ENCODE measurements at regions of chr15 and their contacts with region 1.

Region 1: GRCh38 chr15:52780172-52780980 is 9.8 kb downstream of the ONECUT1 start:
- DNase-seq: peak; percentile 55 to 73 (median 70)
- H3K4me3 ChIP-seq: peak overlapping the region; percentile 22 to 53 (median 34)
- H3K27ac ChIP-seq: no peak overlapping the region
- H3K4me1 ChIP-seq: peaks cover 0 to 9% (median 0%) of the 10 kb centered on the region in 3 donors
- H3K27me3 ChIP-seq: peaks cover 39% of the 10 kb centered on the region
- CTCF ChIP-seq: peak; percentile 87

Region 2: DNA sequence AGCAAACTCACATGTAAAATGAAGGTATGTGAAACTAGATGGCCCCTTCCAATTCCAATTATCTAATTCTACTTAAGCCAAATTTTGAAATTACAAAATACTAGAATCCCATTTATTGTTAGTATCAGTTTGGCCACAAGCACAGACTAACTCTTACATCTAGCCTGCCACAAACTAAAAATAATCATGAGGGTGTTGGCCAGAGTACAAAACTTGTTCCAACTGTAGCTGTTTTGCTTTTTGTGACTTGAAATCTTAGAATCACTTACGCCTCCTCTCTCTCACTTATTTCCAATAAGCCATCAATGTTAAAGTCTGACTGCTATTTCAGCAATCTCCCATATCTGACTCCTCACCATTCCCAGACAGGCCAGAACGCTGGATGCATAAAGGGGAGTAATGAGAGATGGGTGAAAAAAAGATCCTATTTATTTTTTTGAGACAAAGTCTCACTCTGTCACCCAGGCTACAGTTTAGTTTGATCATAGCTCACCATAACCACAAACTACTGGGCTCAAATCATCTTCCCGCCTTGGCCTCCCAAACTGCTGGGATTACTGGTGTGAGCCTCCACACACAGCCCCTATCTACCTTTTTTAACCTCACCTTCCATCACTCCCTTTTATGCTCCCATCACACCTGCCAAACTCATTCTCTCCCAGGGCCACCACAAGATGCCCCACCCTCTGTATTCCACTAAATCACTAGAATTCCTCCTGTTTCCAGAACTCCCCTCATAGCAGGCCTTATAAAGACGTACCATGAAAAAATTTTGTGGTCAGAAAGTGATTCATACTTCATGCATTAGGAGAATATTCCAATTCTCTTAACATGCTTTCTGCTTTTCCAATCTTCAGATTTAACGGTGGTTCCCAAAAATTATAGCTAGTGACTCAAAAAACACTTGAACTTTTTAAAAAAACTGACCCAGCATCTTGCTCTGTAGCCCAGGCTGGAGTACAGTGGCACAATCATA is 137.7 kb before region 1 on chr15:
- intact Hi-C with region 1: no loop called
- DNase-seq: no peak
- H3K4me3 ChIP-seq: no peak overlapping the region
- H3K27ac ChIP-seq: no peak overlapping the region
- H3K4me1 ChIP-seq: peaks cover 0 to 2% (median 0%) of the 10 kb centered on the region in 3 donors
- H3K27me3 ChIP-seq: no peaks in the 10 kb centered on the region
- CTCF ChIP-seq: no peak

Region 3: DNA sequence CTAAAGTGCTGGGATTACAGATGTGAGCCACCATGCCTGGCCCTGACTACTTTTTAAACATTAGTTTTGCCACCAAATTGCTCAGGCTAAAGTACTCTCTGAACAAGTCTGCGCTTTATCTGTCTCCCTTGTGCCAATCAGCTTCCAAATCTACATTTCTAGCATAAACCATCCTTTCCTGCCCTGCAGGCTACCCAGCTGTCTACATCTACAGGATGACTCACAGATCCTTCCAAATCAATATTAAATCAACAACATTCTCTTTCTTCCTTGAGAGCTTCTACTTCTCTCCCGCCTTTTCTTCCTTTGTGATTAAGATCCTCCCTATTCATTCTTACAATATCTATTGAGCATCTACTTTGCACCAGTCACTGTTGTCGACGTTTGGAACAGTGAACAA is 85.2 kb before region 1 on chr15:
- intact Hi-C with region 1: no loop called
- DNase-seq: no peak
- H3K4me3 ChIP-seq: no peak overlapping the region
- H3K27ac ChIP-seq: no peak overlapping the region
- H3K4me1 ChIP-seq: no peaks in the 10 kb centered on the region
- H3K27me3 ChIP-seq: no peaks in the 10 kb centered on the region
- CTCF ChIP-seq: no peak

Region 4: DNA sequence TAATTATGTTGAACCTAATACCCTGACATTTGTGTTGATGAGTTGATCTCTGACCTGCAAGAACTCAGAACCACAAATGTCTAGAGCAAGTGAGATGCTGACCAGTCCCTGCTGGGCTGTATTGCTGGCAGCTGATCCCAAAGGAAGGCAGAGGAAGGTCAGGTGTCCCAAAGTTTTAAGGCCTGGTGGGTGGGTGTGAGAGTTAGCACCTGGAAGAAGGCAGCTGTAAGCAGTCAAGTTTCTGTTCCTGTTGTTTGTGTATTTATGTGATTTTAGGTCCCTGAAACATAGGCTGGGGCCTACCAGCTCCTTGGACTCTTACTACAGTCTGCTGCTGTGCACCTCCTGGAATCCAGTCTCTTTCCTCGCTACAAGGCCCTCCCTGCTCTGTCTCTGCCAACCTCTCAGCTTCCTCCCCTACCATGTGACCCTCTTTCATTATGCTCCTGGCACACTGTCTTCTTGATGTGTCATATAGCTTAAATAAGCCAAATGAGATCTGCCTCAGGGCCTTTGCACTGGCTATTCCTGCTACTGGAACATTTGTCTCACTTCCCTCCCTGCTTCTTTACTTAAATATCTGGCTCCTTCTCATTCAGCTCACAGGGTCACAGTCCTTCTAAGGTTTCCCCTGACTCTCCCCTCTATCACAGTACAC is 70.2 kb before region 1 on chr15:
- intact Hi-C with region 1: no loop called
- DNase-seq: no peak
- H3K4me3 ChIP-seq: no peak overlapping the region
- H3K27ac ChIP-seq: no peak overlapping the region
- H3K4me1 ChIP-seq: no peaks in the 10 kb centered on the region
- H3K27me3 ChIP-seq: no peaks in the 10 kb centered on the region
- CTCF ChIP-seq: no peak

Region 5: DNA sequence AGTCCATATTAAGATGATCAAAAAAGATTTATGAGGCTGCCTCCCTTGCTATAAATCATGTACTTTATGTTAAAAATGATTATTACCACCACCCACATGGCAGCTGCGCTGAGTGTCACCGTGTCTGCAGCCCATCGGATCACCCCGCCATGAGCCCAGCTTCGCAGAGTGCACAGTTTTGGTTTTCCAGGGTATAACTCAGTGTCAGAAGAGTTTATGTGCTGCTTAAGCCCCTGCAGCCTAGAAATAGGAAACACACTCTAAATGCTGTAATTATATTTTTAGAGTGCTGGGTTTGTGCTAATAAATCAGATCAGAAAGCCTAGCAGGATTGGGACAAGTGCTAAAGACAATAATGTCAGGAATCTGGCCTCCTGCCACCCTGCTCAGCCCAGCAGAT is 64.4 kb after region 1 on chr15:
- intact Hi-C with region 1: no loop called
- DNase-seq: peak in 2 of 5 donors; percentile 1 to 4
- H3K4me3 ChIP-seq: no peak overlapping the region
- H3K27ac ChIP-seq: no peak overlapping the region
- H3K4me1 ChIP-seq: no peaks in the 10 kb centered on the region
- H3K27me3 ChIP-seq: no peaks in the 10 kb centered on the region
- CTCF ChIP-seq: no peak

Region 6: GRCh38 chr15:53197426-53197839 is 417.1 kb after region 1 on chr15:
- intact Hi-C with region 1: loop called (anchors 10 kb)
- DNase-seq: peak; percentile 50 to 81 (median 63)
- H3K4me3 ChIP-seq: no peak overlapping the region
- H3K27ac ChIP-seq: no peak overlapping the region
- H3K4me1 ChIP-seq: no peaks in the 10 kb centered on the region
- H3K27me3 ChIP-seq: peaks cover 3% of the 10 kb centered on the region
- CTCF ChIP-seq: peak; percentile 68